CD4-positive, alpha-beta T cell (primary cell): ENCODE measurements at regions of chr18 and their contacts with region 1.

Region 1: GRCh38 chr18:20971886-20972267 is 139.7 kb downstream of the ROCK1 start:
- DNase-seq: peak in 3 of 14 experiments; percentile 29 to 33 (median 29)
- ATAC-seq: peak; percentile 44
- H3K4me3 ChIP-seq: no peak overlapping the region
- H3K4me3 Mint-ChIP-seq: no peak overlapping the region
- H3K27ac ChIP-seq: no peak overlapping the region
- H3K27ac Mint-ChIP-seq: no peak overlapping the region
- H3K4me1 ChIP-seq: no peaks in the 10 kb centered on the region
- H3K4me1 Mint-ChIP-seq: peaks cover 5% of the 10 kb centered on the region
- H3K27me3 ChIP-seq: no peaks in the 10 kb centered on the region
- H3K27me3 Mint-ChIP-seq: no peaks in the 10 kb centered on the region
- CTCF ChIP-seq: peak; percentile 29

Region 2: DNA sequence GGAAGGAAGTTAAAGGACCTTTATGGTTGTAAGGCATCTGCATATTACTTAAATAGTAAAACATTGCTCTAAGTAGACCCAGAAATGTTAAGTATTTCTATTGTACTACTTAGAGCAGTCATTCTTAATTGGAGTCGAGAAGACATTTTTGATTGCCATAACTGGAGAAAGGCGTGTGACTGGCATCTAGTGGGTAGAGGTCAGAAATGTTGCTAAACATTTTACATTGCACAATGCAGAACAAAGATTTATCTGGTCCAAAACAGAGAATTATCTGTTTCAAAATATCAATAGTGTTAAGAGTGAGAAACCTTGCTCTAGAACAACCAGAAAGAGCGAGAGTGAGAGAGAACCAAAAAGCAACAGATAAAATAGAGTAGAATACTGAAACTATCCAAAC is 163.0 kb after region 1 on chr18:
- CTCF ChIA-PET with region 1: no interaction called
- POLR2A ChIA-PET with region 1: no interaction called
- intact Hi-C with region 1: loop called (anchors 1 to 5 kb)
- DNase-seq: peak in 10 of 14 experiments; percentile 3 to 68 (median 14)
- ATAC-seq: peak; percentile 49
- H3K4me3 ChIP-seq: no peak overlapping the region
- H3K4me3 Mint-ChIP-seq: no peak overlapping the region
- H3K27ac ChIP-seq: no peak overlapping the region
- H3K27ac Mint-ChIP-seq: no peak overlapping the region
- H3K4me1 ChIP-seq: no peaks in the 10 kb centered on the region
- H3K4me1 Mint-ChIP-seq: no peaks in the 10 kb centered on the region
- H3K27me3 ChIP-seq: no peaks in the 10 kb centered on the region
- H3K27me3 Mint-ChIP-seq: no peaks in the 10 kb centered on the region
- CTCF ChIP-seq: peak; percentile 72

Region 3: DNA sequence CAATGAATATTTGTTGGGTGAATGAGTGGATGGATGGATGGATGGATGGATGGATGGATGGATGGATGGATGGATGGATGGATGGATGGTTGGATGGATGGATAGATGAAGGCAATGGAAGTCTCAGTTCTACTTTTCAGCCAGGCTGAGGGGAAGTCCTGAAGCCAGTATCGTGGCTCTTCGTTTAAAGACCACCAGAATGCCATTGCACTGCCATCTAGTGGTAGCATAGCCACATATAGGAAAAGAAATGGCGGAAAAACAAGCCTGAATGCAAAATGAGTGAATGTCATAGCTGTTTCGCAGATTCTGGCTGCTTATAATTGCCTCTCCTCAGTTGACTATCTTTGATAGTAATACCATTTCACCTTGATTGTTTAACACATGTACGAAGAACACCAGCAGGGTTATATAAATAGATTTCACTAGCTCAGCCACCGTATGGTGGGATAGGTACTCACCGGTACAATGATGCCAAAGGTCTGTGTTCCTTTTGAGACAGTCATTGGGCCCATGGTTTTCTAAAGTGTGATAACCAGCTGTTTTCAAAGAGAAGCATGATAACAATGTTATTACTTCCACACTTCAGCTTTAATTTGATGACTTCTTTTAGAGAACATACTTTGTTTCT is 207.8 kb after region 1 on chr18:
- CTCF ChIA-PET with region 1: no interaction called
- POLR2A ChIA-PET with region 1: no interaction called
- intact Hi-C with region 1: loop called (anchors 5 to 10 kb)
- DNase-seq: peak in 10 of 14 experiments; percentile 2 to 71 (median 28)
- ATAC-seq: peak; percentile 43
- H3K4me3 ChIP-seq: no peak overlapping the region
- H3K4me3 Mint-ChIP-seq: no peak overlapping the region
- H3K27ac ChIP-seq: no peak overlapping the region
- H3K27ac Mint-ChIP-seq: no peak overlapping the region
- H3K4me1 ChIP-seq: no peaks in the 10 kb centered on the region
- H3K4me1 Mint-ChIP-seq: peaks cover 6% of the 10 kb centered on the region
- H3K27me3 ChIP-seq: no peaks in the 10 kb centered on the region
- H3K27me3 Mint-ChIP-seq: no peaks in the 10 kb centered on the region
- CTCF ChIP-seq: peak; percentile 61

Region 4: GRCh38 chr18:22342625-22343024 is 1370.7 kb after region 1 on chr18:
- CTCF ChIA-PET with region 1: no interaction called
- POLR2A ChIA-PET with region 1: no interaction called
- intact Hi-C with region 1: no loop called
- DNase-seq: peak in 7 of 14 experiments; percentile 12 to 66 (median 44)
- ATAC-seq: peak; percentile 18
- H3K4me3 ChIP-seq: no peak overlapping the region
- H3K4me3 Mint-ChIP-seq: no peak overlapping the region
- H3K27ac ChIP-seq: peak overlapping the region in 1 of 2 donors; percentile 26
- H3K27ac Mint-ChIP-seq: peak overlapping the region; percentile 57
- H3K4me1 ChIP-seq: peaks cover 64% of the 10 kb centered on the region
- H3K4me1 Mint-ChIP-seq: peaks cover 18% of the 10 kb centered on the region
- H3K27me3 ChIP-seq: peaks cover 3 to 10% of the 10 kb centered on the region in 2 experiments
- H3K27me3 Mint-ChIP-seq: peaks cover 28% of the 10 kb centered on the region
- CTCF ChIP-seq: no peak